Right ventricle myocardium inferior (tissue), 1 donor: ENCODE measurements at regions of chr5 and their contacts with region 1.

Region 1: DNA sequence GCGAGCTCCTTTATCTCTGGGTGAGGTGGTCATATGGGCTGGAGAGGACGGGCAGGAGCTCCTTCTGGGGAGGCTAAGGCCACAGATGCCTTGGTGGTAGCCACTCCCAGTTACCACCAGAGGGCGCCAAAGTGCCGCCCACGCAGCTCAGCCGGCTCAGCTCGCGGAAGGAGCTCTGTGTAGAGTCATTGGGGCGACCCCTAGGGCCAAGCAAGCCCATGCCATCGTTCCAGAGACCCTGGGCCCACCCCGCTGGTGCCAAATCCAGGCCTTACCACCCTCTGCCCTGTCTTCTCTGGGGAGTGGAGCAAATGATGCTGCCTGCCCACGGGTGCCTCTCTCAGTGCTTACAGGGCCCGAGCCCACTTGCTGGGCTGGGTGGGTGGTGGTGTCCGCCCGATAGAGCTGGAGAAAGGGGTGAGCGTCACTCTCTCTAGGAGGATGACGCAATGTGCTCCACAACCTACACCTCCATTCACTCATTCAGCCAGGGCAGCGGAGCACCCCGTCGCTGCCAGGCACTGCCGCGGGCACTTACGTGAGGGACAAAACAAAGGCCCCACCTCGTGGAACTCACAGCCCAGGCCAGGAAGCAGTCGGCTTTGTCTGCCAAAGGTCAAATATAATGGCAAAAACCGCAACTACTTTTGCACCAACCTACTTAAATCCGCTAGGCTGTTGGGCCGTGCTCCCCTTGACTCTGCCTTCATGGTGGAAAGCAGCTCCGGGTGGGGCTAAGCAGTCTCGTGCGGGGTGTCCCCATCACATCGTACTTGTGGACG is 13.8 kb downstream of the TSPAN17 start:
- DNase-seq: peak; percentile 86
- ATAC-seq: peak; percentile 78

Region 2: GRCh38 chr5:176817841-176818377 is 156.9 kb after region 1 on chr5:
- intact Hi-C with region 1: loop called (anchors 5 kb)
- DNase-seq: peak; percentile 72
- ATAC-seq: no peak

Region 3: DNA sequence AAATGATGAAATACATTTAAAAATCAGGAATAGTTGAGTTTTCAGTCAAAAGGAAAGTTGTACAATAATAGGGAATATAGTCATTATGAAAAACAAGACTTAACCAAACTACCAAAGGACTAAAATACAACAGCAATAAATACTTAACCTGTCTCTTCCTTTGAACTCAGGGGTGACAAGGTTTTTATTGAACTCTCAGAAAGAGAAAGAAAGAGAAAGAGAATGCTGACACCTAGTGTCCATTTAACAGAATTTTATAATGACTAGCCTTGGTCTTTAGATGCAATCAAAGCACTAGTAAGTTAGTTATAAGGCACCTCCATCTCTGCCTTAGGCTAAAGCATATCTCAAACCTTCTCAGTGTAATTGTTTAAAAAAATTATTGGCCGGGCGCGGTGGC is 298.0 kb after region 1 on chr5:
- intact Hi-C with region 1: loop called (anchors 2 kb)
- DNase-seq: no peak
- ATAC-seq: no peak